ENCODE measurements at regions of chr14 and their contacts with region 1.

Region 1: DNA sequence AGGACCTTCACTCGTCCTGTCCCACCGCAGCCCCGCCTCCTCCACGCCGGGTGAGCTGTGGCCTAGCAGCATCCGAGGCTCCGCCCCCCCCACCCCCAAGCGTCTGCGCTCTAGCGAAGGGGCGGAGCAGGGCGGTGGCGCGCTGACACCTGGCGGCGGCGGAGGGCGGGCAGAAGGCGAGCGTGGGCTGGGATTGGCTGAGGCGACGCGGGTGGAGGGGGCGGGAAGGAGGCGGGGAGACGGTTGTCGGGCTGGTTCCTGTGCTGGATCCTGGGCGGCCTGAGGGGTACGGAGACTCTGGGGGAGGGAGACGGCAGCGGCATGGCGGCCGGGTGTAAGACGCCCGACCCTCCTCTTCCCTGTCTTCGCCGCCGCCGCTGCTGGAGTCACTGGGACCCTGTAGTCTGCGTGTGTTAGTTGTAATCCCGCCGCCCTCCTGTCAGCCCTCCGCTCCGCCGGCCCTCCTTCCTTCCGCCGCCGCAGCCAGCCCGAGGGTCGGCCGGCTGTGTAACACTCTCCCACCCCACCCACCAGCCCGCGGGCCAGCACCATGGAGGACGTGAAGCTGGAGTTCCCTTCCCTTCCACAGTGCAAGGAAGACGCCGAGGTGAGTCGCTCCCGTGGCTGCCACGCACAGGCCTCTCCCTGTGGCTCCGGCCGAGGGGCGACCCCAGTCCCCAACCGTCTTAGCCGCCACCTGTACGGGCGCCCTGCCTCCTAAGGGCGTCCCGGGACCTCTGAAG is at the start of gene STYX:
- DNase-seq: peak; percentile 98 to 99
- H3K4me3 ChIP-seq: peak within 1 kb of the TSS; percentile 88 to 99
- H3K27ac ChIP-seq: peak within 1 kb of the TSS; percentile 85 to 93
- H3K4me1 ChIP-seq: peaks cover 0 to 4% of the 10 kb centered on the region in 2 donors
- H3K27me3 ChIP-seq: no peaks in the 10 kb centered on the region
- CTCF ChIP-seq: peak in 1 of 3 experiments; percentile 19
- total RNA-seq, gene STYX: 5.2 TPM

Region 2: DNA sequence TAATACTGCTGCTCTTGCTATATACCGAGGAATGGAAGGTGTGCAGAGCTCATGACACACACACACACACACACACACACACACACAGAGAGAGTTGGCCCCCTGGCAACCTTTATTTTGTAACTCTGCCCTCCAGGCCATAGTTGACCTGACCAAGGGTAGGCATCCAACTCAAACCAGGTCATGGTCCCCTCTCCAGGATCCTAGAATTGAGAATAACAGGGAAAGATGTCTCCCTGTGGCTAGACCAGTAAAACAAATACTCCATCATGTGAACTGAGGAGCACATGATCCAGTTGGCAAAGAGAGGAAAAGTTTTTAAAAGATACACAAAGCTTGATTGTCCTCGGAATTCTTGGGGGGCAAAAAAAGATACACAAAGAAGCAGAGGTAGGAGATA is 46.0 kb before region 1 on chr14:
- intact Hi-C with region 1: no loop called
- DNase-seq: no peak
- H3K4me3 ChIP-seq: no peak overlapping the region
- H3K27ac ChIP-seq: no peak overlapping the region
- H3K4me1 ChIP-seq: no peaks in the 10 kb centered on the region
- H3K27me3 ChIP-seq: no peaks in the 10 kb centered on the region
- CTCF ChIP-seq: no peak

Region 3: DNA sequence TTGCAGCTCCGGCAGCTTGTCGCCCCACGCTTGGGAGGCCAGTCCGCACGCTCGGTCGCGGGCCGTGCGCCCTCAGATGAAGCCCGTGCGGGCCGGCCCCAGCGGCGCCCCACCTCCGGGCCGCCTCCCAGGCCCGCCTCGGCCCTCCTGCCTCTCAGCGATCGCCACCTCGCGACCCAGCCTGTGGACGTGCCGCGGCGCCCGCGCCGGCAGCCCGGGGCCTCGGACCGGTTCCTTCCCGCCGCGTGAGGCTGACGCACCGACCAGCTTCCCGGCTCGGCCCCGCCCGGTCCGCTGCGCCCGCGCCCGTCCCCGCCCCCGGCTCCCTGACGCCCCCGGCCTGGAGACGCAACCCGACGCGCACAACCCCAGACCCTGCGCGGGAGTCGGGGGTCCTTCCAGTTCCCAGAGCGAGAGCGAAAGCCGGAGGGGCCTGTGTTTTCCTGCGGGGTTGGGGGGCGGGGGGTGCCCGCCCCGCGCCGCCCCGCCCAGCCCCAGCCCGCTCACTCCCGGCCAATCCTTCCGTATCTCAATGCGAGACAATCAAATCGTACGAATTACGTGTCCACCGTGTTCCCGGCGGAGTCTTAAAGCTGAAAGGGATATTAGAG is 34.5 kb before region 1 on chr14 and contains the start of gene ERO1A:
- intact Hi-C with region 1: loop called (anchors 1 kb)
- DNase-seq: peak; percentile 44 to 91
- H3K4me3 ChIP-seq: peak within 1 kb of the TSS; percentile 96 to 98
- H3K27ac ChIP-seq: peak within 1 kb of the TSS; percentile 97 to 99
- H3K4me1 ChIP-seq: peaks cover 3 to 4% of the 10 kb centered on the region in 2 donors
- H3K27me3 ChIP-seq: no peaks in the 10 kb centered on the region
- CTCF ChIP-seq: no peak
- total RNA-seq, gene ERO1A: 25.9 TPM

Region 4: GRCh38 chr14:52706724-52707706 is 23.1 kb before region 1 on chr14 and contains the start of gene PSMC6:
- intact Hi-C with region 1: loop called (anchors 1 kb)
- DNase-seq: peak; percentile 80 to 96
- H3K4me3 ChIP-seq: peak within 1 kb of the TSS; percentile 78 to 96
- H3K27ac ChIP-seq: peak within 1 kb of the TSS; percentile 89
- H3K4me1 ChIP-seq: peaks cover 7 to 15% of the 10 kb centered on the region in 2 donors
- H3K27me3 ChIP-seq: no peaks in the 10 kb centered on the region
- CTCF ChIP-seq: no peak
- total RNA-seq, gene PSMC6: 19.3 TPM

Region 5: GRCh38 chr14:52791203-52792096 is 61.4 kb after region 1 on chr14 and contains the start of gene GNPNAT1:
- intact Hi-C with region 1: loop called (anchors 1 kb)
- DNase-seq: peak; percentile 42 to 92
- H3K4me3 ChIP-seq: peak within 1 kb of the TSS; percentile 83 to 91
- H3K27ac ChIP-seq: peak within 1 kb of the TSS; percentile 94 to 95
- H3K4me1 ChIP-seq: peaks cover 6 to 21% of the 10 kb centered on the region in 2 donors
- H3K27me3 ChIP-seq: no peaks in the 10 kb centered on the region
- CTCF ChIP-seq: no peak
- total RNA-seq, gene GNPNAT1: 39.9 TPM

Region 6: GRCh38 chr14:52961060-52961639 is 231.1 kb after region 1 on chr14:
- intact Hi-C with region 1: loop called (anchors 5 kb)
- DNase-seq: peak in 1 of 2 donors; percentile 78
- H3K4me3 ChIP-seq: no peak overlapping the region
- H3K27ac ChIP-seq: peak overlapping the region; percentile 60 to 64
- H3K4me1 ChIP-seq: peaks cover 0 to 8% of the 10 kb centered on the region in 2 donors
- H3K27me3 ChIP-seq: no peaks in the 10 kb centered on the region
- CTCF ChIP-seq: peak; percentile 70 to 78 (median 78)

Measured in ascending aorta (tissue), 2 donors.